ENCODE measurements at regions of chr22 and their contacts with region 1.

Region 1: DNA sequence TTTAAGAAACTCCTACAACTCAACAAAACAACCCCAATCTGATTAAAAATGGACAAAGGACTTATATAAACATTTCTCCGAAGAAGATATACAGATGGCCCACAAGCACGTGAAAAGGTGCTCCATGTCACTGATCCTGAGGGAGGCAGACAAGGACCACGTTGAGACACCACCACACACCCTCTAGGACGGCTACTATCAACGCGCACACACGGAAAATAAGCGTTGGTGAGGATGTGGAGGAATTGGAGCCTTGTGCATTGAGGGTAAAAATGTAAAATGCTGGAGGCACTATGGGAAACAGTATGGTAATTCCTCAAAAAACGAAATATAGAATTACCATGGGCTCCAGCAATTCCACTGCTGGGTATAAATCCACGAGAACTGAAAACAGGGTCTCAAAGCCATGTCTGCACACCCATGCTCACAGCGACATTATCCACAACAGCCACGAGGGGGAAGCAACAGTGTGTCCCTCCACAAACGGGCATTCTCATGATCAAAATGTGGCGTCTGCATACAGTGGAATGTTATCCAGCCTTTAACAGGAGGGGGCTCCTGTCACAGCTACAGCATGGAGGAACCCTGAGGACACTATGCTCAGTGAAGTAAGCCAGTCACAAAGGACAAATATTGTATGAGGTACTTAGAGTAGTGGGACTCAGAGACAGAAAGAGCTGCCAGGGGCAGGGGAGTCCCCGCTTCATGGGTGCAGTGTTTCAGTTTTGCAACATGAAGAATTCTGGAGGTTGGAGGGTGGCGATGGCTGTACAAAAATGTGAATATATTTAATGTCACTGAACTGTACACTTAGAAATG is 22.5 kb downstream of the YPEL1 start:
- DNase-seq: peak; percentile 49 to 91 (median 80)

Region 2: GRCh38 chr22:21641789-21642583 is 71.1 kb before region 1 on chr22 and contains the start of gene SDF2L1:
- intact Hi-C with region 1: no loop called
- DNase-seq: peak; percentile 95 to 100 (median 99)

Region 3: GRCh38 chr22:21952586-21953571 is 239.8 kb after region 1 on chr22 and contains the start of gene PPM1F:
- intact Hi-C with region 1: loop called (anchors 2 kb)
- DNase-seq: peak; percentile 52 to 95 (median 86)

Measured in head of caudate nucleus (tissue), 42 donors.